Esophagus squamous epithelium (tissue), 5 donors: ENCODE measurements at regions of chr4 and their contacts with region 1.

Region 1: DNA sequence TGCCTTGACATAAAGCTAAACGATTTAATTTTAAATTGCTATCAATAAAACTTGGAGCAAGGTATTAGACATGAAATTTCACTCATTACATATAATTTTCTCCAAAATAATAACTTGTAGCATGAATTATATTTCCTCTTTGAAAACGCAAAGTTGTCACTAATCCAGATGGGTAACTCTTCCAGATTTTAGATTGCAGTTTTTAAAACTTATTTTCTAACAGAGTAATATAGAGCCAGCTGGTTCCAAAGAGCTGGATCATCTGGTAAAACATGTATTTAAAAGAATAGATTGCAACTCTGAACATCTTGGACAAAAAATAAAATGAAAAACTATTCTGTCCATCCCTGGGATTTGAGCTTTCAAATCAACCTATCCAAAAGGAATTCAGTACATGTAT is 238.2 kb upstream of the INTU start:
- DNase-seq: no peak
- H3K4me3 ChIP-seq: no peak overlapping the region
- H3K27ac ChIP-seq: no peak overlapping the region
- H3K4me1 ChIP-seq: no peaks in the 10 kb centered on the region
- H3K27me3 ChIP-seq: no peaks in the 10 kb centered on the region
- CTCF ChIP-seq: no peak
- POLR2A ChIP-seq: no peak

Region 2: GRCh38 chr4:126957556-126957955 is 437.0 kb before region 1 on chr4:
- intact Hi-C with region 1: loop called (anchors 10 kb)
- DNase-seq: no peak
- H3K4me3 ChIP-seq: no peak overlapping the region
- H3K27ac ChIP-seq: no peak overlapping the region
- H3K4me1 ChIP-seq: peaks cover 0 to 9% (median 0%) of the 10 kb centered on the region in 3 donors
- H3K27me3 ChIP-seq: no peaks in the 10 kb centered on the region
- CTCF ChIP-seq: no peak
- POLR2A ChIP-seq: no peak